Posterior vena cava (tissue), 2 donors: ENCODE measurements at regions of chr1 and their contacts with region 1.

Region 1: DNA sequence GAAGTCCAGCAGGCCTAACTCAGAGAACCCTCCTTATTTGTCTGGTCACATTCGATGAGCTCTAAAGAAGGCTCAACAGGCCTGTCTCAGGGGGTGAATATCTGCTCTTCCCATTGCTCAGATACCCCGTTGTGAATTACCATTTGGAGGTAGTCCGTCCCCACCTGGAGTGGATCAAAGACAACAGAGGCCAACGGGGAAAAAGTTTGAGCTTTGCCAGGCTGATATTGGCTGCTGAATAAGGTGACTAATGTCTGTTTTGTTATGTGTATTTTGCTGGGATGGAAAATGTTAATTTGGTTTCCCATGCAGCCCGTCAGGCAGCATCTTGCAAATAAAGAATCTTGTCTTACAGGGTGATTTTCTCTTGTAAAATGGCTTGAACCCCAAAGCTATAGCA is 69.2 kb upstream of the EPS8L3 start:
- DNase-seq: no peak

Region 2: GRCh38 chr1:108947871-108948525 is 884.9 kb before region 1 on chr1:
- intact Hi-C with region 1: loop called in 1 of 2 experiments (anchors 5 kb)
- DNase-seq: no peak

Region 3: GRCh38 chr1:109850194-109850593 is 17.2 kb after region 1 on chr1:
- intact Hi-C with region 1: loop called in 1 of 2 experiments (anchors 2 kb)
- DNase-seq: no peak

Region 4: GRCh38 chr1:109895720-109896504 is 63.0 kb after region 1 on chr1:
- intact Hi-C with region 1: no loop called
- DNase-seq: peak; percentile 87

Region 5: GRCh38 chr1:110060034-110060661 is 227.2 kb after region 1 on chr1:
- intact Hi-C with region 1: no loop called
- DNase-seq: peak; percentile 83